AG04449 (cell line): ENCODE measurements at regions of chr20 and their contacts with region 1.

Region 1: GRCh38 chr20:8722276-8722928 is 346.5 kb upstream of the PLCB4 start:
- DNase-seq: no peak
- H3K4me3 ChIP-seq: no peak overlapping the region
- CTCF ChIP-seq: peak; percentile 64

Region 2: GRCh38 chr20:7980332-7981046 is 741.9 kb before region 1 on chr20:
- CTCF ChIA-PET with region 1: interaction called, 119 read pairs
- POLR2A ChIA-PET with region 1: no interaction called
- DNase-seq: no peak
- H3K4me3 ChIP-seq: no peak overlapping the region
- CTCF ChIP-seq: peak; percentile 47

Region 3: GRCh38 chr20:8073116-8073832 is 649.1 kb before region 1 on chr20:
- CTCF ChIA-PET with region 1: interaction called, 14 read pairs
- POLR2A ChIA-PET with region 1: no interaction called
- DNase-seq: no peak
- H3K4me3 ChIP-seq: no peak overlapping the region
- CTCF ChIP-seq: no peak

Region 4: GRCh38 chr20:8305449-8305978 is 416.9 kb before region 1 on chr20:
- CTCF ChIA-PET with region 1: interaction called, 17 read pairs
- POLR2A ChIA-PET with region 1: no interaction called
- DNase-seq: no peak
- H3K4me3 ChIP-seq: no peak overlapping the region
- CTCF ChIP-seq: peak; percentile 45

Region 5: DNA sequence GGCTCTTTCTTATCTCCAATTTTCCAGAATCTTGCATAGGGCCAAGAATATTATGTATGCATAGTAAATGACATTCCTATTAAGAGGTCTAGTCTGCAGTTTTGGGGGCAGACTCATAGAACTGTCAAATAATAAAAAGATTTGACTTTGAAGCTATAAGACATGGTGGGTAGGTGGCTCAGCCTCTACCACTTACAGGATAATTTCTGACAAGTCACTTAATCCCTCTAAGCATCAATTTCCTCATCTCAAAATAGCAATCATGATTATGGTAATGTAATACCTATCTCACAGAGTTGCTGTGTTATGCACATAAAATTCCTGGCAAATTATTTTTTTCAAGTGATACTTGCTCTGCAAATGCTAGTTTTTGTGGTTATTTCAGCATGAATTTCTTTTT is 261.2 kb before region 1 on chr20:
- CTCF ChIA-PET with region 1: interaction called, 10 read pairs
- POLR2A ChIA-PET with region 1: no interaction called
- DNase-seq: no peak
- H3K4me3 ChIP-seq: no peak overlapping the region
- CTCF ChIP-seq: no peak

Region 6: DNA sequence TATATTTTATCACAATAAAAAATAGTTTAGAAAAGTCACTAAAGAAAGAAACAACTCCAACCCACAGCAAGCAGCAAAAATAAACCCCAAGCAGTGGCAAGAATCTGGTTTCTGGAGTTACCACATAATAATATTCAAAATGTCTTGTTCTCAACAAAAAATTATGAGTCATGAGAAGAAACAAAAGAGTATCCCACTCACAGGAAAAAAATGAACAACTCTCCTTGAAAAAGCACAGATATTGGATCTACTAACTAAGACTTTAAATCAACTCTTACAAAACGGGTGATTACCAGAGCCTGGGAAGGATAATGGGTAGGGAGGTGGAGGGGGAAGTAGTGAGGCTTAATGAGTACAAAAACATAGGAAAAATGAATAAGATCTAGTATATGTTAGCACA is 164.7 kb before region 1 on chr20:
- CTCF ChIA-PET with region 1: interaction called, 13 read pairs
- POLR2A ChIA-PET with region 1: no interaction called
- DNase-seq: no peak
- H3K4me3 ChIP-seq: no peak overlapping the region
- CTCF ChIP-seq: no peak